ENCODE measurements at regions of chr2 and their contacts with region 1.

Region 1: GRCh38 chr2:68467077-68467960 is at the starts of genes APLF and FBXO48:
- H3K4me3 Mint-ChIP-seq: peak within 1 kb of the TSS; percentile 96
- H3K27ac Mint-ChIP-seq: peak within 1 kb of the TSS; percentile 94
- H3K4me1 Mint-ChIP-seq: peaks cover 29% of the 10 kb centered on the region
- H3K27me3 Mint-ChIP-seq: no peaks in the 10 kb centered on the region

Region 2: DNA sequence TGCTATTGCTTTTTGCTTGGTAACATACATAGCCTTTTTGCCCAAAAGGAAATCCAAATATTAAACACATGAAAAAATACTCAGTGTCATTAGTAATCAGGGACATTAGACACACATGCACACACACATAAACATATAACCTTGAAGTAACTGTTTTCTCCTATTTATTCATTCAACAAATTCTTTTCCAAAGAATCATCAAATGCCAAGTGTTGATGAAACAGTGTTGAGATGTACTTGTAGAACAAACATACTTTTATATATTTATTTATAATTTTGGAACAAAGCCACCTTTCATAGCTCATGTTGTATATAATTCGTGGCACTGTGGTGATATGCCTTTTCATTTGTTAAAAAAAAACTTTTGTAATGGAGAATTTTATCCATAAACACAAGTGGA is 81.1 kb after region 1 on chr2:
- intact Hi-C with region 1: no loop called
- H3K4me3 Mint-ChIP-seq: no peak overlapping the region
- H3K27ac Mint-ChIP-seq: no peak overlapping the region
- H3K4me1 Mint-ChIP-seq: no peaks in the 10 kb centered on the region
- H3K27me3 Mint-ChIP-seq: no peaks in the 10 kb centered on the region

Region 3: DNA sequence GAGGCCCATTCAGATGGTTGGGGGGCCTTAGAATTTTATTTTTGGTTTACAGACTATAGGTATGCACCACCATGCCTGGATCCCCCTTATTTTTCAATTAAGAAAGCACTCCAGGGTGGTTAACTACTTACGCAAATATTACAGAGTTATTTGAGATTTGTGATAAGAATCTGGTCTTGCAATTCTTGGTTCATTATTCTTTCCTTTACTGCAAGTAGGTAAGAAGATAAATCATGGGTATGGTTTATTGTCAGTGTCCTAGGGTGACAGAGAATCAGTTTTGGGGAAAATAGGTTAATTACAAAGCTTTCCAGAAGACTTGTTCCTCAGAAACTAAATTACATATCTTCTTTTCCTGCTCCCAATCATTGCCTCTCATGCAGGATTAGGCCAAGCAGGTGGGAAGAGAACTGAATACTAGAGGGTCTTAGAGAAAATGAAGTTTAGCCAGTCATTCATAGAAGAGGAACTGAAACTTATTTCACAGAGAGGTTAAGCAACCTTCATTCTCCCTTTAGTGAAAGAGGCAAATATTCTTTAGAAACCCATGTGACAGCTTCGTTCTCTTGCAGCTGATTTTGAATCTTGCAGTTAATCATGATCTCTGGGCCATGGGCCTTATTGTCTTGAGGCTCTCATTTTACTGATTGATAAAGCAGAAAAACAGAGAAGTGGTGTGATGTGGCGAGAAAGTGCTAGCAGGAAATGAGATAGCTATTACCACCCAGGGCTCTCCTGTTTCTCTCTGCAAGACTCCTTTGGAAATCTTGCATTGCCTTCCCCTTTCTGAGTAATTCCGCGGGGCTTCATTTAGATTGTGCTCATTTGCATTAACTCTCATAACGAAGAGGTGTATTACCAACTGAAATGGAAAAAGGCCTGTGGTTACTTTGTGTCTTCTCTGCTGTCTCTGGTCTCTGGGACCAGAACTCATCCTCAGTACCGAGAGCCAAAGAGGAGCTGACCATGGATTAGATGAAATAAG is 222.5 kb after region 1 on chr2:
- intact Hi-C with region 1: loop called (anchors 5 kb)
- H3K4me3 Mint-ChIP-seq: peak overlapping the region; percentile 57
- H3K27ac Mint-ChIP-seq: peak overlapping the region; percentile 87
- H3K4me1 Mint-ChIP-seq: peaks cover 56% of the 10 kb centered on the region
- H3K27me3 Mint-ChIP-seq: no peaks in the 10 kb centered on the region

Region 4: GRCh38 chr2:68742626-68743415 is 275.5 kb after region 1 on chr2:
- intact Hi-C with region 1: loop called (anchors 10 kb)
- H3K4me3 Mint-ChIP-seq: peak overlapping the region; percentile 64
- H3K27ac Mint-ChIP-seq: peak overlapping the region; percentile 88
- H3K4me1 Mint-ChIP-seq: peaks cover 90% of the 10 kb centered on the region
- H3K27me3 Mint-ChIP-seq: no peaks in the 10 kb centered on the region

Region 5: GRCh38 chr2:68870215-68870614 is 402.9 kb after region 1 on chr2:
- intact Hi-C with region 1: no loop called
- H3K4me3 Mint-ChIP-seq: no peak overlapping the region
- H3K27ac Mint-ChIP-seq: peak overlapping the region; percentile 39
- H3K4me1 Mint-ChIP-seq: peaks cover 15% of the 10 kb centered on the region
- H3K27me3 Mint-ChIP-seq: no peaks in the 10 kb centered on the region